ENCODE measurements at regions of chr2 and their contacts with region 1.

Region 1: GRCh38 chr2:128090945-128091725 is at the start of gene UGGT1:
- DNase-seq: peak; percentile 93
- H3K4me3 Mint-ChIP-seq: peak within 1 kb of the TSS; percentile 99
- H3K27ac Mint-ChIP-seq: peak within 1 kb of the TSS; percentile 74
- H3K4me1 Mint-ChIP-seq: peaks cover 7% of the 10 kb centered on the region
- H3K27me3 Mint-ChIP-seq: no peaks in the 10 kb centered on the region
- CTCF ChIP-seq: no peak
- total RNA-seq, gene UGGT1: 59.2 and 71.3 TPM in 2 replicates

Region 2: DNA sequence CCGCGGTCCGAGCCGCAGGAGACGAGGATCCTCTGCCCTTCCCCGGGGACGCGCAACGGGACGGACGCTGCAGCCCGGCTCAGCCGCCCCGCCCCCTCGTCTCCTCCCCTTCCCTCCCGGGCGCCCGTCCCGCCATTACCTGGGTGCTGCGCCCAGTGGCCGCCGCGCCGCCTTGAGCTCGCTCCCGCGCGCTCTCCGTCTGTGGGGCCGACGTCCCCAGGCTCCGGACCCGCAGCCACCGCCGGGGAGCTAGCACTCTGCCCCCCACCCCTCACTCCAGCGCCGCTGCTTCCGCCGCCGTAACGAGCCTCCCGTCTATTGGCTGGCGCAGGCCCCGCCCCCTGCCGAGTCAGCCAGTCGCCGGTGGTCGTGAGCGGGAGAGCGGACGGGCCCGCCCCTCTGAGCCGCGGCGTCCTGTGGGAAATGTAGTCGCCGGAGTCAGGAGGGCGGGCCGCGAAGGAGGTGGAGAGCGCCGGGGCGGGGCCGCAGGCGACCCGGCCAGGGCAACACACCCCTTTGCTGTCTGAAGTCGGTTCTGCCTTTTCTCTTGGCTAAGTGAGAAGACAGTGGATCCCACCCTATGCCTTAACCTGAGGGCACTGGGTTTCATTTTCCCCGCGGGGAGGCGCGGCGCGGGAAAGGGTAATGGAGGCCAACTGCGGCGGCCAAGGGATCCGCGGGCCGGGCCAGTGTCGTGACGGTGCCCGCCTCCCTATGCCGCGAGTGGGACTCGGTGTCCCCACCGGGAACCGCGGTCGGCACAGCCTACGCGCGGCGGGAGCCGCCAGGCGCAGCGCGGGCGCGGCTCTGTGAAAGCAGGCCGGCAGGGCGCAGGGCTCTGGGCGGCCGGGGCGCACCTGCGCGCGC is 63.1 kb before region 1 on chr2 and contains the start of gene SAP130:
- CTCF ChIA-PET with region 1: no interaction called
- intact Hi-C with region 1: loop called (anchors 5 kb)
- DNase-seq: peak; percentile 98
- H3K4me3 Mint-ChIP-seq: peak within 1 kb of the TSS; percentile 84
- H3K27ac Mint-ChIP-seq: peak within 1 kb of the TSS; percentile 83
- H3K4me1 Mint-ChIP-seq: peaks cover 10% of the 10 kb centered on the region
- H3K27me3 Mint-ChIP-seq: peaks cover 33% of the 10 kb centered on the region
- CTCF ChIP-seq: no peak
- total RNA-seq, gene SAP130: 25.1 and 29.7 TPM in 2 replicates

Region 3: GRCh38 chr2:128062571-128062970 is 28.6 kb before region 1 on chr2:
- CTCF ChIA-PET with region 1: interaction called, 14 read pairs
- intact Hi-C with region 1: no loop called
- DNase-seq: no peak
- H3K4me3 Mint-ChIP-seq: no peak overlapping the region
- H3K27ac Mint-ChIP-seq: no peak overlapping the region
- H3K4me1 Mint-ChIP-seq: no peaks in the 10 kb centered on the region
- H3K27me3 Mint-ChIP-seq: peaks cover 7% of the 10 kb centered on the region
- CTCF ChIP-seq: no peak